ENCODE measurements at regions of chr6 and their contacts with region 1.

Region 1: DNA sequence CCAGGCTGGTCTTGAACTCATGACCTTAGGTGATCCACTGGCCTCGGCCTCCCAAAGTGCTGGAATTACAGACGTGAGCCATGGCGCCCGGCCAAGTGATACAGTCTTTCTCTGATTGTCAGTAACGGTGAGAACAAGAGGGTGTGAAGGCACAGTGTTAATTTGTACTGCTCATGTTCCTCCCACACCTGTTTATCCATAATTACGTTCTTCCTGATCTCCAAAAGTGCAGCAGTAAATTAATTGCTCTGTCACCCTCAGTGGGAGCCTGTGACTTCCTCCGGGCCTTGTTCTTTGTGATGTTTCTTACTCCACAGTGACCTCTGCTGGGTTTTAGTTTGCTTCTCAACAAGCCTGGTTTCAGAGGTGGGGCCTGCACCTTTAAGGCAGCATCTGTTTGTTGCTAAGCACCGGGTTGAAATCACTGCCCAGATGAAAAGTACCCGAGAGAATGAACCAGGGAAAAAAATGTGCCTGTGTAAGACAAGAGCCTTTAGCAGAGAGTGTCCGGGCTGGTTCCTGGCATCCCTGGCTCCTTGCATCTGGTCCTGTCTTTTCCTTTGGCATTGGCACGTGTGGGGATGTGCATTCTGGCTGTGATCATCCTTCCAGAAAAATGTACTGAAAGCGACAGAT is 89.1 kb upstream of the CLDN20 start:
- DNase-seq: peak in 1 of 2 donors; percentile 80
- H3K4me3 ChIP-seq: no peak overlapping the region
- H3K27ac ChIP-seq: no peak overlapping the region
- H3K4me1 ChIP-seq: peaks cover 6 to 18% of the 10 kb centered on the region in 2 donors
- H3K27me3 ChIP-seq: no peaks in the 10 kb centered on the region
- CTCF ChIP-seq: peak; percentile 59 to 80 (median 63)

Region 2: GRCh38 chr6:154733012-154733625 is 441.6 kb before region 1 on chr6 and contains the start of gene SCAF8:
- intact Hi-C with region 1: loop called (anchors 10 kb)
- DNase-seq: peak; percentile 13 to 88
- H3K4me3 ChIP-seq: peak within 1 kb of the TSS; percentile 85 to 97
- H3K27ac ChIP-seq: peak within 1 kb of the TSS; percentile 100
- H3K4me1 ChIP-seq: peaks cover 2 to 39% of the 10 kb centered on the region in 2 donors
- H3K27me3 ChIP-seq: no peaks in the 10 kb centered on the region
- CTCF ChIP-seq: peak; percentile 70 to 89 (median 71)
- total RNA-seq, gene SCAF8: 22.6 TPM

Region 3: GRCh38 chr6:154928325-154928922 is 246.3 kb before region 1 on chr6:
- intact Hi-C with region 1: loop called (anchors 1 kb)
- DNase-seq: peak in 1 of 2 donors; percentile 79
- H3K4me3 ChIP-seq: no peak overlapping the region
- H3K27ac ChIP-seq: no peak overlapping the region
- H3K4me1 ChIP-seq: no peaks in the 10 kb centered on the region
- H3K27me3 ChIP-seq: no peaks in the 10 kb centered on the region
- CTCF ChIP-seq: peak; percentile 66 to 81 (median 68)

Region 4: GRCh38 chr6:155026022-155026726 is 148.5 kb before region 1 on chr6:
- intact Hi-C with region 1: loop called (anchors 1 kb)
- DNase-seq: peak; percentile 49 to 92
- H3K4me3 ChIP-seq: no peak overlapping the region
- H3K27ac ChIP-seq: peak overlapping the region; percentile 61 to 73
- H3K4me1 ChIP-seq: peaks cover 0 to 29% of the 10 kb centered on the region in 2 donors
- H3K27me3 ChIP-seq: no peaks in the 10 kb centered on the region
- CTCF ChIP-seq: no peak

Region 5: DNA sequence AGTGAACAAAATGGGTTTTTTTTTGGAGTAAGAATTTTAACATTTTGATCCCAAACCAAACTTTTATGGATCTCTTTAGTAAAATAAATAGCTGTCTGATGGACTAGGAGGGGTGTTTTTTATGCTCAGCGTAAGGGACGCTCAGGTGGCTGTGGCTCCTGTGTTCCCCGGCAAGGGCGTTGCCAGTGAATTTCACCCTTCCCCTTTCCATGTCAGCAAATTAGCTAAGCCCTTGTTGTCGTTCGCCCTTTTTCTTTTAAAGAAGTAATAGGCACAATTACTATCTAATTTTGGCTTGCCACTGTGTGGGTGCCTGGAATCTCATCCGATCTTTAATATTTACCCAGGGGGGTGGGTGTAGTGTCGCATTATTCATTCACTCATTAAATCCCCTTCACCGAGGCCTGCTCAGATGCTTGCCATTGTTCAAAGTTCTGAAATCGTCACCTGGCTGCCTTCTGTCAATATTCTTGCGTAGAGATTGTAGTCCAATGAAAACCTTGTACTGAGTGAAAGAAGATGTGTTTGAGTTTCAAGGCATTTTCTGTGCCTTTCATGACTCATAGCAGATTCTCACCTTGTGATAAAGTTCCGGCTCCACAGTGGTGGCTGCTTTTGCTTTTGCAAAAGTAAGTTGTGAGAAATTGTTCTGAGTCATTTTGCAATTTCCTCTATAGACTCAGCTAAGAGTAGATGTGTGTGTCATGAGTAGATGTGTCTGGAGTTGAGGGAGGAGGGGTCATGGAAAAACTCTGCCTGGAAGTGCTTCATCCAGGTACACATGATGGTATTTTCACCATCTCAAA is 49.2 kb after region 1 on chr6:
- intact Hi-C with region 1: no loop called
- DNase-seq: no peak
- H3K4me3 ChIP-seq: no peak overlapping the region
- H3K27ac ChIP-seq: no peak overlapping the region
- H3K4me1 ChIP-seq: peaks cover 11 to 19% of the 10 kb centered on the region in 2 donors
- H3K27me3 ChIP-seq: no peaks in the 10 kb centered on the region
- CTCF ChIP-seq: no peak

Region 6: DNA sequence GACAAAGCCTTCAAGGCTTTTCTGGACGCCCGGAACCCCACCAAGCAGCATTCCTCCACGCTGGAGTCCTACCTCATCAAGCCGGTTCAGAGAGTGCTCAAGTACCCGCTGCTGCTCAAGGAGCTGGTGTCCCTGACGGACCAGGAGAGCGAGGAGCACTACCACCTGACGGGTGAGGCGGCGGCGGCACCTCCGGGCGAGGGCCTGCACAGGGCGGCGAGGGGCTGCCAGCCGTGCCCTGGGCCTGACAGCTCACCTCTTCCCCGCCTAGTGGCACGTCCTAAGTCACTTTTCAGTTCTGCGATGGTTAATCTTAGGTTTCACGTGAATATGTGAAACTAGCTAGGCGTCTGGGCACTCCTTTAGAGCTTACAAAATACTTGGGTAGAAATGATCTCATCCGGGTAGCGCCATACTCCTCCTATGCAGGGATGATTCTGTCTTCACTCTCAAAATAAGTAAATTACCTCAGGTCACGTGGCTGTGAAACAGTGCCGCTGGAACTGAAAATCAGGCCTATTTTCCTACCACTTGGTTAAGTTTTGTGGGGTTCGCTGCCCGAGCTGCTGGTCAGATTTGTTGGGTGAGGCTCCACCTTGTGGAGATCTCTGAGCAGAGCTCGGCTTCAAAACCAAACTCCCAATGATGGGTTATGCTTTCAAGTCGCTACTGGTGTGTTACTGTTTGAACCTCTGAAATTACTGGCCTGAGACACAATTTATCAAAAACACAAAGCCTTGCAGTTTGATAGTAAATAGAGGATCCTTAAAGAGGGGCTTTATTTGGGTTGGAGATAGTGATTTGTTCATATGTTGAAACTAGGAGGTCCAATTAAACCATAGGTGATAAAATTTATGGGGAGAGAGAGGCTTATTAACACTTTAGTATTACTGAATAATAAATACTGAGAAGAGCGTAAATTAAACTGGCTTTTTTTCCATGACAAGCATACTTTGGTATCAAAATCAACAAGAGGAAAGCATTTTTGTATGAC is 73.6 kb after region 1 on chr6:
- intact Hi-C with region 1: loop called (anchors 1 kb)
- DNase-seq: peak in 1 of 2 donors; percentile 79
- H3K4me3 ChIP-seq: peak overlapping the region; percentile 27 to 30
- H3K27ac ChIP-seq: peak overlapping the region; percentile 43 to 76
- H3K4me1 ChIP-seq: peaks cover 0 to 20% of the 10 kb centered on the region in 2 donors
- H3K27me3 ChIP-seq: no peaks in the 10 kb centered on the region
- CTCF ChIP-seq: peak; percentile 62 to 85 (median 67)

Region 7: DNA sequence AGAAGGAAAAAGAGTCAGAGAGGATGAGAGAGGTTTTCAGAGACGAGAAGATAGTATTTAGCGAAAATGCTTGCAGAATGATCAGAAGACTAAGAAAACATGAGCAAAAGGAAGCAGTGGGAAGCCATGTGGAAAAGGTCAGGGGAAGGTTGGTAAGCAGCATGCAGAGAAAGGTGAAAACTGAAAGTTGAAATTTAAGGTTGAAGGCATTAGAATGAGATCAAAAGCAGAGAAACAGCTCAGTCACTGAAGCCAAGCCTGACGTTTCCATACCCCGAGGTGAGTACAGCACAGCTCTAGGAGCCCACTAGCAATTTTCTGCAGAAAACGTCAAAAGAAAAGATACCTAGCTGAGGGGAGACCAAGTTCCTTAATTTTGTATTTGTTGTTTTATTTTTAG is 158.7 kb after region 1 on chr6:
- intact Hi-C with region 1: no loop called
- DNase-seq: no peak
- H3K4me3 ChIP-seq: no peak overlapping the region
- H3K27ac ChIP-seq: no peak overlapping the region
- H3K4me1 ChIP-seq: no peaks in the 10 kb centered on the region
- H3K27me3 ChIP-seq: no peaks in the 10 kb centered on the region
- CTCF ChIP-seq: no peak

Region 8: DNA sequence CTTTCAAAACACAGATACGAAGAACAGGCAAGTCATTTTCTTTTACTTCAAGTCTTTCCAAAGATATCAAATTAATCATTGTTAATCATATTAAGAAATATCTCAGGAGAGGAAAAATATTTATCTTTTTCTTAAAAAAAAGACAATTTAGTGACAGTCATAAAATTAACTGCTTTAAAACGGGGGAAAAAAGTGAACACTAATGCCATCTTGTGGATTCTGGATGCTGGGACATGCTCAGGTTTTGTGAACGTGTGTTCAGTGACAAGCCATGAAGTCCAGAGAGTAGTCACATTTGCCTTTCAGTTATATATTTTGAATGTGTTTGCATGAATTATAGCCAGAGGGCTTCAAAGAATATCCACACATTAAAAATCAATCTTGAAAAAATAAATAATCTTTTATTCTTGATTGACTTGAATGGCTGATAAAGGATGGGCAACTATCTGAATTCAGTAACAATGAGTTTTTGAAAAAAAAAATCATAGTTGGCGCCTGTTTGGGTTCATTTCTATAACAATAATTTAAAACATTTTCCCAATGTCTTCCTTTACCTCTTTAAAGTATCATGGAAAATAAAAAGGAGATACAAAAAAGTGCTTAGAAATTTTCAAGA is 355.6 kb after region 1 on chr6:
- intact Hi-C with region 1: loop called (anchors 5 kb)
- DNase-seq: no peak
- H3K4me3 ChIP-seq: no peak overlapping the region
- H3K27ac ChIP-seq: peak overlapping the region in 1 of 2 donors; percentile 68
- H3K4me1 ChIP-seq: peaks cover 0 to 15% of the 10 kb centered on the region in 2 donors
- H3K27me3 ChIP-seq: no peaks in the 10 kb centered on the region
- CTCF ChIP-seq: peak; percentile 59 to 81 (median 70)